ENCODE measurements at regions of chr1 and their contacts with region 1.

Region 1: DNA sequence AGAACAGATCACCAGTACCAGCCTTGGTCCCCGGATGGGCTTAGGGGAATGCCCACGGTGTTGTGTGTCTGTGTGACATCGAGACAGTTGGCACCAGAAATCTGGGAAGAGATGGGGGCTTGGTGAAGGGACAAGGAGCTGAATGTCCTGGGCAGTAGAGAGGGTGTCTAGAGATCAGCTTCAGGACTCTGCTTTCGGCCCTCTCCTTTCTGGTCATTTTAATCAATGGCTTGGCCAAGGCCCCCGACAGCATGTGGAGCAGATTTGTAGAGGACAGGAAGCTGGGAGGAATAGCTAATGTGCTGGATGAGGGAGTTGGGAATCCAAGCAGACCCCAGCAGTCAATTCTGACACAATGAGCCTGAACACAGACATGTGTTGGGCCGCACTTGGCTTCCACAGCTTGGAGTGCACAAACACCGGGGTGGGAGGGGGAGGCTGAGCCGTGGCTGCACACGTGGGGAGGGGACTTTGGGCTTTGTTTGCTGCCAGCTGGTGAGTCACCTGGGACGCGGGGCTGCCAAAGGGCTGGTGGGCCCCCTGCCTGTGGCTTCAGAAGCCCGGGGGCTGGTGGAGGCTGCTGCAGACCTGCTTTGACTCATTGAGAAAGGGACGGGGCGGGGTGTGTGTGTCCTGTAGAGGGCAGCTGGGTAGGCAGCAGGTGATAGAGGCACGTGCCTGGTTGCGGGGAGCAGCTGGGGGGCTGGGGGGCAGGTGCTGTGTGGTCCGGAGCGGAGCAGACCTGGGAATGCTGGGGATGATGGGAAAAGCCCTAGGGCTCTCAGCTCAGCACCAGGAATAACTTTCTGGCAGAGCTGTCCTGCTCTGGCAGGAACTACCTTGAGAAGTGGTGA is 20.9 kb downstream of the SLC1A7 start:
- DNase-seq: peak; percentile 83
- ATAC-seq: peak; percentile 83
- H3K4me3 ChIP-seq: peak overlapping the region in 1 of 3 experiments; percentile 58; a peak in 2 of 6 replicates
- H3K27ac ChIP-seq: peak overlapping the region; percentile 55
- H3K4me1 ChIP-seq: peaks cover 84% of the 10 kb centered on the region
- H3K27me3 ChIP-seq: peaks cover 2 to 17% of the 10 kb centered on the region in 2 experiments; a peak in 4 of 5 replicates
- CTCF ChIP-seq: peak; percentile 65
- EP300 ChIP-seq: peak; percentile 27 to 88; a peak in 2 of 4 replicates
- POLR2A ChIP-seq: no peak
- RAD21 ChIP-seq: peak; percentile 32

Region 2: GRCh38 chr1:53061859-53062707 is 59.5 kb before region 1 on chr1 and contains the start of gene PODN:
- CTCF ChIA-PET with region 1: no interaction called
- POLR2A ChIA-PET with region 1: no interaction called
- in situ Hi-C with region 1: no loop called
- intact Hi-C with region 1: no loop called
- DNase-seq: no peak
- ATAC-seq: peak; percentile 40
- H3K4me3 ChIP-seq: peak within 1 kb of the TSS in 2 of 3 experiments; percentile 17 to 25; a peak in 2 of 6 replicates
- H3K27ac ChIP-seq: no peak within 1 kb of the TSS
- H3K4me1 ChIP-seq: no peaks in the 10 kb centered on the region
- H3K27me3 ChIP-seq: peaks cover 4 to 15% of the 10 kb centered on the region in 2 experiments; a peak in 4 of 5 replicates
- CTCF ChIP-seq: no peak
- EP300 ChIP-seq: no peak
- POLR2A ChIP-seq: no peak
- RAD21 ChIP-seq: no peak
- total RNA-seq, gene PODN: not detected in 2 replicates

Region 3: DNA sequence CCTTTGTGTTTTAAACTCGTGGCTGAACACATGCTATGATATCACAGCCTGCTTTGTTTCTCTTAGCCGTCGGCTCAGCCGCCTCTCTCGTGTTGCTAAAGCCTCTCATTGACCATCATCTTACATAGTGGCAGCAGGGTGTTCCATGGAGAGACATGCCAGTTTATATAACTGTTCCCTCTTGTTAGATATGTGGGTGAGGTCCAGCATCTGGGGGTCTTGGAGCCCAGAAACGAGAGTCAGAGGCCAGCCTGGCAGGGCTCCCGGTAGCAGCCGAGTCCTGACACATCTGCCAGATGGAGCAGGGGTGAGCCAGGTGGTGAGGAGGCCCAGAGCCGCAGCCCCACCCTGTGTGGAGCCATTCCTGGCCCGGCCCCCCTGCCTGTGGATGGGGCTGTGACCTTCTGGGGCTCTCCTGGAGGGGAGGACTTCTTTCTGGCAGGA is 47.7 kb before region 1 on chr1:
- CTCF ChIA-PET with region 1: no interaction called
- POLR2A ChIA-PET with region 1: no interaction called
- in situ Hi-C with region 1: no loop called
- intact Hi-C with region 1: no loop called
- DNase-seq: no peak
- ATAC-seq: no peak
- H3K4me3 ChIP-seq: no peak overlapping the region
- H3K27ac ChIP-seq: no peak overlapping the region
- H3K4me1 ChIP-seq: peaks cover 43% of the 10 kb centered on the region
- H3K27me3 ChIP-seq: peaks cover 2 to 50% of the 10 kb centered on the region in 2 experiments
- CTCF ChIP-seq: no peak
- EP300 ChIP-seq: no peak
- POLR2A ChIP-seq: no peak
- RAD21 ChIP-seq: no peak

Region 4: DNA sequence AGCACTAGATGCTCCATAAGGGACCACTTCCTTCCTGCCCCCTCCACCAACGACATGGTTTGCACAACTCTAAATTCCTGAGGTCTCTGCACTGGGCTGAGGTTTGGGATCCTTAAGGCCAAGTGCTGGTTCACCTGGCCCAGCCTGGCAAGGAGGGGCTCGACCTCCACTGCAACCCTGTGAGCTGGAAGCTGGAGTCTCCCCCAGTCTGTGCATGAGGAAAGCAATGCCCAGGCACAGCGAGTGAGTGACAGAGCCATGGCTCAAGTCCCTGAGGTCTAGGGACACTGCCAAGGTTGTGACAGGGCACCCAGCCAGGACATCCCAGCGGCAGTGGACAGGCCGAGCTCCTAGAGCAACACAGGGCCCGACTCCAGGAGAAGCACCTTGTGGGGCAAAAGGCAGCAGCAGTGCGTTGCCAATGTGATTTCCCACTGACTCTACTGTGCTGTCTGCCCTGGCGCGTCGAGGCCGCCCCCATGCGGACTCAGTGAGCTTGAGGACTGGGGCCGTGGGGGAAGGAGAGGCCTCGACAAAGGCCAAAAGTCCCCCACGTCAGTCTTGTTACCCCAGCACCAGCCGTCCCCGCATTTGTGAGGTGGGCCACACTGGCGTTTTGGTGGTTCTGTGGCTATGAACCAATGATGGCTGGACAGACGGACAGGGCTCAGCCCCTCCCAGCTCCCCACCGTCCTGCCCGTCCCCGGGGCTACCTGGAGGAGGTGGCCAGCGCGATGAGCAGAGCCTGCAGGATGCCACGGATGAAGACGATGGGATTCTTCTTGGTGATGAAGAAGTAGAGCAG is 29.5 kb before region 1 on chr1:
- CTCF ChIA-PET with region 1: no interaction called
- POLR2A ChIA-PET with region 1: interaction called, 24 read pairs
- in situ Hi-C with region 1: no loop called
- intact Hi-C with region 1: loop called (anchors 5 kb)
- DNase-seq: no peak
- ATAC-seq: no peak
- H3K4me3 ChIP-seq: no peak overlapping the region; a peak in 1 of 6 replicates
- H3K27ac ChIP-seq: no peak overlapping the region
- H3K4me1 ChIP-seq: peaks cover 80% of the 10 kb centered on the region
- H3K27me3 ChIP-seq: peaks cover 11 to 26% of the 10 kb centered on the region in 2 experiments; a peak in 4 of 5 replicates
- CTCF ChIP-seq: no peak
- EP300 ChIP-seq: no peak
- POLR2A ChIP-seq: no peak
- RAD21 ChIP-seq: no peak

Region 5: GRCh38 chr1:53110370-53111072 is 11.0 kb before region 1 on chr1:
- CTCF ChIA-PET with region 1: no interaction called
- POLR2A ChIA-PET with region 1: interaction called, 30 read pairs
- in situ Hi-C with region 1: no loop called
- intact Hi-C with region 1: no loop called
- DNase-seq: no peak
- ATAC-seq: peak; percentile 12
- H3K4me3 ChIP-seq: peak overlapping the region in 1 of 3 experiments; percentile 52; a peak in 1 of 6 replicates
- H3K27ac ChIP-seq: peak overlapping the region; percentile 73
- H3K4me1 ChIP-seq: peaks cover 99% of the 10 kb centered on the region
- H3K27me3 ChIP-seq: peaks cover 6 to 66% of the 10 kb centered on the region in 2 experiments
- CTCF ChIP-seq: no peak
- EP300 ChIP-seq: no peak
- POLR2A ChIP-seq: no peak
- RAD21 ChIP-seq: no peak

Region 6: DNA sequence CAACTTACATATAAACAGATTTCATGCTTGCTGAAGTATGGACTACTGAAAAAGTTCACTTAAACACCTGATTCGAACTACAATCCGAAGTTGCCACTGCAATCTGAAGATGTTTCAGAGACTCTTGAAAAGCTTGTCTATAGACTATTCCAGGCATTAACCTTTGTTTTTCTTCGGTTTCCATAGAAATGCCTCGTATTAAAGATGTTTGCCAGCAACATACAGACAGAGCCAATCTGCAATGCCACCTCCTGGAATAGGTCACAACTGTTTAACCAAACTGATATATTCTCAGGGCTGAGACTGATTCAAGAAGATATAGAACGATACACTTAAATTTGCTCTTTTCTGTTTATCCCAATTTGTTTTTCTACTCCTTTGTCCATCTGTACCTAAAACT is 308.7 kb after region 1 on chr1:
- CTCF ChIA-PET with region 1: no interaction called
- POLR2A ChIA-PET with region 1: no interaction called
- in situ Hi-C with region 1: no loop called
- intact Hi-C with region 1: no loop called
- DNase-seq: no peak
- ATAC-seq: no peak
- H3K4me3 ChIP-seq: no peak overlapping the region
- H3K27ac ChIP-seq: no peak overlapping the region
- H3K4me1 ChIP-seq: no peaks in the 10 kb centered on the region
- H3K27me3 ChIP-seq: peaks cover 0 to 16% of the 10 kb centered on the region in 2 experiments; a peak in 3 of 5 replicates
- CTCF ChIP-seq: no peak
- EP300 ChIP-seq: no peak
- POLR2A ChIP-seq: no peak
- RAD21 ChIP-seq: no peak